Prostate gland (tissue), 2 donors: ENCODE measurements at regions of chr2 and their contacts with region 1.

Region 1: DNA sequence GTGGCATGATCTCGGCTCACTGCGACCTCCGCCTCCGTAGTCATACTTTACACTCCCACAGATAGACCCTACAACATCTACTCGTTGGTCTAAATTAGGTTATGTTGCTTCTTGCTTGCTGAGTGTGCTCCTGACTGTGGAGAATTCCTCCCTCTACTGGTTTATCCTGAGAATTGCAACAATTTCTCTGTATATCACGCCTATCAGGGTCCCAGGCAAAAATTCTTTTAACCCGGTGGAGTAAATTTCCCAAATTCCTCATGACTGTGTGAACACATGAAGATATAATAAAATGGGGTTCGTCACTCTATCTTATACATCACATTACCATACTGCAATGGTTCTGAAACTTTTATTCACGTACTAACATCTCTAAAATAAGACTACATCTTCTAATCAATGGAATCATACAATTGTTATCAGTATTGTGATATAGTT is 156.7 kb downstream of the EVA1A start:
- DNase-seq: no peak
- H3K4me3 ChIP-seq: no peak overlapping the region
- H3K27ac ChIP-seq: no peak overlapping the region
- H3K4me1 ChIP-seq: no peaks in the 10 kb centered on the region
- H3K27me3 ChIP-seq: no peaks in the 10 kb centered on the region
- CTCF ChIP-seq: peak in 3 of 4 experiments; percentile 52 to 66 (median 63)
- POLR2A ChIP-seq: no peak

Region 2: GRCh38 chr2:74919827-74920226 is 484.2 kb before region 1 on chr2:
- intact Hi-C with region 1: loop called (anchors 10 kb)
- DNase-seq: peak; percentile 11
- H3K4me3 ChIP-seq: peak overlapping the region in 1 of 2 donors; percentile 5
- H3K27ac ChIP-seq: no peak overlapping the region
- H3K4me1 ChIP-seq: no peaks in the 10 kb centered on the region
- H3K27me3 ChIP-seq: no peaks in the 10 kb centered on the region
- CTCF ChIP-seq: peak; percentile 57 to 82 (median 69)
- POLR2A ChIP-seq: no peak

Region 3: GRCh38 chr2:75157430-75157829 is 246.6 kb before region 1 on chr2:
- intact Hi-C with region 1: loop called (anchors 10 kb)
- DNase-seq: no peak
- H3K4me3 ChIP-seq: no peak overlapping the region
- H3K27ac ChIP-seq: no peak overlapping the region
- H3K4me1 ChIP-seq: peaks cover 3% of the 10 kb centered on the region
- H3K27me3 ChIP-seq: no peaks in the 10 kb centered on the region
- CTCF ChIP-seq: peak in 1 of 4 experiments; percentile 28
- POLR2A ChIP-seq: no peak